Cardiac septum (tissue), 1 donor: ENCODE measurements at regions of chr15 and their contacts with region 1.

Region 1: DNA sequence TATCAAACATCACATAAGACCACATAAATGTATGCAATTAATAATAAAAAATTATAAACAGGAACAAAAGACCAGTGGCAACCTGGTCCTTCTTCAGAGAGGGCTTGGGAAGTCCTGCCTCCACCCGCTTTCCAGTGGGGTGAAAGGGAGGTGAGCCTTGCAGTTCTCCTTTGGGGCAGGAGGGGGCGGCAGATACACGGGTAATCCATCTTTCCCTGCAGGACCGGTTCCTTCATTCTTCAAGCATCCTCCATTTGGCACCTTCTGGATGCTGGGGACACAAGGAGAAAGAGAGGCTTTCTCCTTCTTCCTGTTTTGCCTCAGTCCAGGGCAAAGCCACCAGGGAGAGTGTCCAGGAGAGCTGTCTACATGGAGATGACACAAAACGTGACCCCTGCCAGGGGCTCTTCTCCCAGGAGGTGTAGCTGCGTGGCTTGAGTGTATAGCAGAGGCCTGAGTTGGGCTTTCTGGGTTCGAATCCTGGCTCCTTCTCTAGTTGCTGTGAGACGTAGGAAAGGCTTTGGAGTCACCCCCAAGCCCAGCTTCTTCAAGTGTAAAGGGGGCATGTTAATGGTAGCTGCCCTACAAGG is 23.2 kb downstream of the RPLP1 start:
- DNase-seq: peak; percentile 89

Region 2: GRCh38 chr15:70466895-70467529 is 991.1 kb after region 1 on chr15:
- intact Hi-C with region 1: loop called (anchors 5 kb)
- DNase-seq: no peak

Region 3: GRCh38 chr15:70488002-70488605 is 1012.2 kb after region 1 on chr15:
- intact Hi-C with region 1: loop called (anchors 2 kb)
- DNase-seq: peak; percentile 90